IMR-90 (cell line): ENCODE measurements at regions of chr6 and their contacts with region 1.

Region 1: DNA sequence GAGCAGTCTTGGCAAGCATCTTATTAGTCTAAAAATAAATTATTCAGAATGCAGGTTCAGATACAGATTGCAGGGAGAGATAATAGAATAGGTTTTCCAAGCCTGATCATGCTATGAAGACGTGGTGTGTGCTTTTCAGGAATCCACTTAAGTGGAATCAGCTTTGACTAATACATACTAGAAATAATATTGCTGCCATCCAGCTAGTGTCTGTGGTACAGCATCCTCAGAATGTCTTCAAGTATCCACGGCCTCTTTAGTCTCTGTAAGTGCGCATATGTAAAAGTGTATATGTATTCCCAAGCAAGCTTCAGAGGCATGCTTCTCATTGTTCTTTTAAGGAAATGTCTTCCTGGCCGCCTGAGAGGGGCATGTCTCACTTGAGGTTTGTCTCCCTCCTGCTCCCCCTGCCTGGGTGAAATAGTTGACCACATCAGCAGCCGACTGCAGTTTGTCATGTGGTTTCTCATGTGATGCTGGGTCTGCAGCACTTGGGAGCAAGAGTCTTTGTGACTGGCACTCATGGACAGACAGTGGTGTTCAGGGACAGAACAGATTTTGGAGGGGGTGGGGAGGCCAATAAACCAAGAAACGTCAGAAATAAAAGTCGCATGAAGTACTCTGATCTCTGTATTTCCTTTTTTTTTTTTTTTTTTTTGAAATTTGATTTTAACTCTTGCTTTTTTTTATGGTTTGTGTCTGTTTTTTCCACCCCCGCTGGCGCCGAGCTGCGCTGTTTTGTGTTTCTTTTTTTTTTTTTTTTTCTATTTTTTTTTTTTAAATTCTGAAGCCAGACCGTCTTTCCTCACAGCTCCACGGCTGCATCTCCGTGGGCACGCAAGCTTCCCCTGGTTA is 150.8 kb downstream of the PRL start:
- DNase-seq: peak; percentile 78
- ATAC-seq: peak; percentile 12; the same call in 1 of the 2 replicates
- H3K4me3 ChIP-seq: no peak overlapping the region
- H3K27ac ChIP-seq: peak overlapping the region; percentile 95
- H3K4me1 ChIP-seq: peaks cover 24% of the 10 kb centered on the region
- H3K27me3 ChIP-seq: no peaks in the 10 kb centered on the region
- CTCF ChIP-seq: peak; percentile 43
- POLR2A ChIP-seq: no peak
- RAD21 ChIP-seq: 0 out of 2 replicates have a peak, but pooled peaks have one; percentile 35

Region 2: DNA sequence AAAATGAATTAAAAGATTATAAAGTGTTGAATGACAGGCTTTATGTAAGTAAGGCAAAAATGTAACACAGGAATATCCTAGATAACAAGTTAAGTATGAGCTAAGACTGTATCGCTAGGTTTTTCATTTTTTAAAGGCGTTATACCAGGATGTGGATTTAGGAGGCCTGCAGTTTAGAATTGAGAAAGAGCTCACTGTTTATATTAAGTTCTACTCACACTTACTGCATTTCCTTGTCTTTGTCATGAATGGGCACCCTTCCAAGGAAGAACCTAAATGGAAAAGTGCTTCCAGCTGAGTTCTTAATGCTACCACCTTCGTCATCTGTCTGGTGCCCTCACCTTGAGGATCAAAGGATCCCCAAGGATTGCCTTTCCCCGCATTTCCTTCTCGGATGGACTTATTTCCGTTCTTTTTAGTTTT is 403.8 kb before region 1 on chr6:
- CTCF ChIA-PET with region 1: no interaction called
- POLR2A ChIA-PET with region 1: no interaction called
- dilution Hi-C with region 1: no loop called
- in situ Hi-C with region 1: no loop called
- intact Hi-C with region 1: loop called (anchors 5 kb)
- DNase-seq: peak; percentile 98
- ATAC-seq: peak; percentile 82
- H3K4me3 ChIP-seq: no peak overlapping the region
- H3K27ac ChIP-seq: peak overlapping the region; percentile 47; the same call in 1 of the 2 replicates
- H3K4me1 ChIP-seq: peaks cover 11% of the 10 kb centered on the region
- H3K27me3 ChIP-seq: no peaks in the 10 kb centered on the region
- CTCF ChIP-seq: no peak
- POLR2A ChIP-seq: no peak
- RAD21 ChIP-seq: no peak

Region 3: DNA sequence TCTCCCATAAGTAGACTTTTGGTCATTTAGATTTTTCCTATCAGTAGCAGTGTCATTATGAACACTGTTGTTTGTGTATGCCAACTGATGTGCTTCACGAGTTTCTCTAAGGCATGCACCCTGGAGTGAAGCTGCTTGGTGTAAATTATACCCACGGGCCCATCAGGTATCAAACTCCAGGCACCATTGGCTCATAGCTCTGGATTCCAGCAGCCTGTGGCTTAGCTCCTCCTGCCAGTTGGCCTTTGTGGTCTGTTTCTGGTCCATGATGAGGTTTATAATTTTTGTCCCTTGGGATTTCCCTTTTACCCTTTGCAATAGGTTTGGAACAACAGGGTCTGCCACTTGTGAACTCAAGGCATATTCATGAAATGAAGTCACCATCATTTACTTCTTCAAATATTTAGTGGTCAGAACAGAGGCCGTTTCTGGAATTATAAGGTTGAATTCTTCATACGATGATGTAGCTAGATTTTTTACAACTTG is 199.7 kb before region 1 on chr6:
- CTCF ChIA-PET with region 1: no interaction called
- POLR2A ChIA-PET with region 1: no interaction called
- dilution Hi-C with region 1: no loop called
- in situ Hi-C with region 1: no loop called
- intact Hi-C with region 1: loop called (anchors 2 kb)
- DNase-seq: peak; percentile 98
- ATAC-seq: peak; percentile 84
- H3K4me3 ChIP-seq: no peak overlapping the region
- H3K27ac ChIP-seq: peak overlapping the region; percentile 70
- H3K4me1 ChIP-seq: peaks cover 19% of the 10 kb centered on the region
- H3K27me3 ChIP-seq: no peaks in the 10 kb centered on the region
- CTCF ChIP-seq: no peak
- POLR2A ChIP-seq: peak; percentile 87
- RAD21 ChIP-seq: no peak

Region 4: DNA sequence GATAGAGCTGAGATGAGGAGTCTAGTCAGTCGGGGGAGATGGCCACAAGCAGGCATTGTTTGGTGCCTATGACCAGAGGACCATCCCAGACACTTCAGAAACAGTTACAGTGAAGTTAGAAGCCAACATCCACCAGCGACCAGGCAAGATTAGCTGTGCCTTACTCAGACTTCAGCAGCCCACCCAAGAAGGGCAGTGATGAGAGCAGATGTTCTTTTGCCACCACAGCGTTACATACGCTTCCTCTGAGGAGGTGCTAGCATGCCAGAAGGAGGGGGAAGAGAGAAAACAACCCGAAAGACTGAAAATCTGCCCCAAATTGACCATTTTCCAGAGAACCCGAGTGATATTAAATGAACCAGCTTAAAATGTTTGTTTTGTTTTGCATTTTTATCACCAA is 36.0 kb before region 1 on chr6:
- CTCF ChIA-PET with region 1: no interaction called
- POLR2A ChIA-PET with region 1: no interaction called
- dilution Hi-C with region 1: no loop called
- in situ Hi-C with region 1: no loop called
- intact Hi-C with region 1: no loop called
- DNase-seq: peak; percentile 2
- ATAC-seq: no peak
- H3K4me3 ChIP-seq: no peak overlapping the region
- H3K27ac ChIP-seq: no peak overlapping the region
- H3K4me1 ChIP-seq: peaks cover 7% of the 10 kb centered on the region
- H3K27me3 ChIP-seq: no peaks in the 10 kb centered on the region
- CTCF ChIP-seq: no peak
- POLR2A ChIP-seq: no peak
- RAD21 ChIP-seq: no peak

Region 5: GRCh38 chr6:22613695-22614094 is 467.6 kb after region 1 on chr6:
- CTCF ChIA-PET with region 1: no interaction called
- POLR2A ChIA-PET with region 1: no interaction called
- dilution Hi-C with region 1: no loop called
- in situ Hi-C with region 1: no loop called
- intact Hi-C with region 1: loop called (anchors 5 kb)
- DNase-seq: peak; percentile 98
- ATAC-seq: peak; percentile 96
- H3K4me3 ChIP-seq: no peak overlapping the region
- H3K27ac ChIP-seq: no peak overlapping the region
- H3K4me1 ChIP-seq: peaks cover 9% of the 10 kb centered on the region
- H3K27me3 ChIP-seq: no peaks in the 10 kb centered on the region
- CTCF ChIP-seq: no peak
- POLR2A ChIP-seq: no peak
- RAD21 ChIP-seq: no peak

Region 6: GRCh38 chr6:22880686-22881433 is 734.8 kb after region 1 on chr6:
- CTCF ChIA-PET with region 1: no interaction called
- POLR2A ChIA-PET with region 1: no interaction called
- dilution Hi-C with region 1: no loop called
- in situ Hi-C with region 1: no loop called
- intact Hi-C with region 1: loop called (anchors 1 kb)
- DNase-seq: peak; percentile 99
- ATAC-seq: peak; percentile 91
- H3K4me3 ChIP-seq: no peak overlapping the region
- H3K27ac ChIP-seq: peak overlapping the region; percentile 100; the same call in 1 of the 2 replicates
- H3K4me1 ChIP-seq: peaks cover 16% of the 10 kb centered on the region
- H3K27me3 ChIP-seq: no peaks in the 10 kb centered on the region
- CTCF ChIP-seq: no peak
- POLR2A ChIP-seq: peak; percentile 23; the same call in 1 of the 2 replicates
- RAD21 ChIP-seq: peak; percentile 30

Region 7: GRCh38 chr6:23446394-23447046 is 1300.5 kb after region 1 on chr6:
- CTCF ChIA-PET with region 1: no interaction called
- POLR2A ChIA-PET with region 1: no interaction called
- dilution Hi-C with region 1: no loop called
- in situ Hi-C with region 1: no loop called
- intact Hi-C with region 1: loop called (anchors 1 kb)
- DNase-seq: peak; percentile 76
- ATAC-seq: peak; percentile 94
- H3K4me3 ChIP-seq: no peak overlapping the region
- H3K27ac ChIP-seq: no peak overlapping the region
- H3K4me1 ChIP-seq: no peaks in the 10 kb centered on the region
- H3K27me3 ChIP-seq: no peaks in the 10 kb centered on the region
- CTCF ChIP-seq: peak; percentile 80
- POLR2A ChIP-seq: no peak
- RAD21 ChIP-seq: peak; percentile 89